Activated CD4-positive, alpha-beta memory T cell treated with anti-CD3 and anti-CD28 coated beads for 36 hours (primary cell): ENCODE measurements at regions of chr5 and their contacts with region 1.

Region 1: DNA sequence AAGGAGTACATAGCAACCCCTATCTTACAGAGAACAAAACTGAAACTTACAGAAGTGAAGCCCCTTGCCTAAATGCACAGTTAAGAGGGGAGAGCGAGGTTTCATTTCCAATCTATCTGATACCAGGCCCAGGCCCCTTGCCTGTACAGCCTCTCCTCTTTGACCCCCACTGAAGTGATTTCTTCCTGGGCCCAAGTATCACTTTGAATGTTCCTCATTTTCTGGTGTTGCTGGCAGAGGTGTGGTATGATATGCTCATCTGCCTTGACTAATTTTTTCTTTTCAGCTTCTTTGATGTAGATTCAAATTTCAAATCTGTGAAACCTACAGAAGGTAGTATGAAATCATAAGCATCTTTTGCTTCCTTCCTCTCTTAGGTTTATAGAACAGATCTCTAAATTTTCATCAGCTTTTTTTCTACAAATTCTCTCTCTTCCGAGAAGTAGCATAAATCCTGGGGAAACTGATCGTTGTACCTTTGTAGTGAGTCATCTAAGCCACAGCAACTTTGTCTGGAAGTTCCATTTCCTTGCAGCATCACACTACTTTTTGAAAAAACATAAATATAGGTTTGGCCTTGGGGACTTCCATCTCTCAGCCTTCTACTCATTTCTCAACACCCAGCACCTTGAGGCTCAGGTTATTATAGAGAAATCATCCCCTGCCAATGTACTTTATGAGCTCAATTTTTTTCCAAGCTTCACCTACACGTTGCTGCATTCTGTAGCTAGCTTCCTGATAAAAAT is 402.4 kb upstream of the PTGER4 start:
- DNase-seq: peak; percentile 63
- H3K4me3 Mint-ChIP-seq: peak overlapping the region; percentile 18
- H3K27ac Mint-ChIP-seq: peak overlapping the region; percentile 97
- H3K4me1 Mint-ChIP-seq: peaks cover 61% of the 10 kb centered on the region
- H3K27me3 Mint-ChIP-seq: no peaks in the 10 kb centered on the region

Region 2: GRCh38 chr5:39948867-39949468 is 328.4 kb before region 1 on chr5:
- CTCF ChIA-PET with region 1: interaction called, 3 read pairs
- POLR2A ChIA-PET with region 1: interaction called, 3 read pairs
- intact Hi-C with region 1: loop called (anchors 2 kb)
- DNase-seq: peak; percentile 54
- H3K4me3 Mint-ChIP-seq: no peak overlapping the region
- H3K27ac Mint-ChIP-seq: peak overlapping the region; percentile 4
- H3K4me1 Mint-ChIP-seq: peaks cover 3% of the 10 kb centered on the region
- H3K27me3 Mint-ChIP-seq: no peaks in the 10 kb centered on the region

Region 3: GRCh38 chr5:40240111-40240510 is 37.2 kb before region 1 on chr5:
- CTCF ChIA-PET with region 1: interaction called, 3 read pairs
- POLR2A ChIA-PET with region 1: interaction called, 5 read pairs
- intact Hi-C with region 1: loop called (anchors 1 kb)
- DNase-seq: peak; percentile 84
- H3K4me3 Mint-ChIP-seq: peak overlapping the region; percentile 21
- H3K27ac Mint-ChIP-seq: peak overlapping the region; percentile 92
- H3K4me1 Mint-ChIP-seq: peaks cover 42% of the 10 kb centered on the region
- H3K27me3 Mint-ChIP-seq: no peaks in the 10 kb centered on the region

Region 4: DNA sequence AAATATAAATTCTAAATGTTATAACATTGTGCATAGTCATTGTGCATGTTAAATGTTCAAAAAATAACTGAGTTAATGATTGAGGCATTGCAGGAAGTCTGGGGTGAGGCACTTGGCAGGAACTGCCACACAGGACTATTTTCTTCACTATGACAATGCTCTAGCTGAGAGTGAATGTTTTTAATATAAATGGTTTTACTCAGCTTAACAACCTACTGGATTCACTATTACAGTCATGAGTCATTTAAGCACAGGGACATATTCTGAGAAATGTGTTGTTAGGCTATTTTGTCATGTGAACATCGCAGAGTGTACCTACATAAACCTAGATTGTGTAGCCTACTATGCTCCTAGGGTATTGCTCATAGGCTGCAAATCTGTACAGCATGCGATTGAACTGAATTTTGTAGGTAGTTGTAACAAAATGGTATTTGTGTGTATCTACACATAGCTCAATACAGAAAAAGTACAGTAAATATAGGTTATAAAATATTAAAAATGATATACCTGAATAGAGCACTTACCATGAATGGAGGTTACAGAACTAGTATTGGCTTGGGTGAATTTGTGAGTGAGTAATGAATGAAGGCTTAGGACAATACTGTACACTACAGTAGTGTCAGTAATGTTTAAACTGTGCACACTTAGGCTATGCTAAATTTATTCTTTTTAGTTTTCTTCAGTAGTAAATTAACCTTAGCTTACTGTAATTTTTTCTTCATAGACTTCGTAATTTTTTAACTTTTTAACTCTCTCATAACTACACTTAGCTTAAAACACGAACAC is 56.3 kb after region 1 on chr5:
- CTCF ChIA-PET with region 1: interaction called, 7 read pairs
- POLR2A ChIA-PET with region 1: interaction called, 24 read pairs
- intact Hi-C with region 1: loop called (anchors 1 kb)
- DNase-seq: peak; percentile 56
- H3K4me3 Mint-ChIP-seq: no peak overlapping the region
- H3K27ac Mint-ChIP-seq: peak overlapping the region; percentile 33
- H3K4me1 Mint-ChIP-seq: peaks cover 50% of the 10 kb centered on the region
- H3K27me3 Mint-ChIP-seq: no peaks in the 10 kb centered on the region

Region 5: GRCh38 chr5:40437452-40437861 is 160.1 kb after region 1 on chr5:
- CTCF ChIA-PET with region 1: no interaction called
- POLR2A ChIA-PET with region 1: interaction called, 4 read pairs
- intact Hi-C with region 1: loop called (anchors 2 kb)
- DNase-seq: peak; percentile 58
- H3K4me3 Mint-ChIP-seq: no peak overlapping the region
- H3K27ac Mint-ChIP-seq: peak overlapping the region; percentile 70
- H3K4me1 Mint-ChIP-seq: peaks cover 74% of the 10 kb centered on the region
- H3K27me3 Mint-ChIP-seq: no peaks in the 10 kb centered on the region

Region 6: DNA sequence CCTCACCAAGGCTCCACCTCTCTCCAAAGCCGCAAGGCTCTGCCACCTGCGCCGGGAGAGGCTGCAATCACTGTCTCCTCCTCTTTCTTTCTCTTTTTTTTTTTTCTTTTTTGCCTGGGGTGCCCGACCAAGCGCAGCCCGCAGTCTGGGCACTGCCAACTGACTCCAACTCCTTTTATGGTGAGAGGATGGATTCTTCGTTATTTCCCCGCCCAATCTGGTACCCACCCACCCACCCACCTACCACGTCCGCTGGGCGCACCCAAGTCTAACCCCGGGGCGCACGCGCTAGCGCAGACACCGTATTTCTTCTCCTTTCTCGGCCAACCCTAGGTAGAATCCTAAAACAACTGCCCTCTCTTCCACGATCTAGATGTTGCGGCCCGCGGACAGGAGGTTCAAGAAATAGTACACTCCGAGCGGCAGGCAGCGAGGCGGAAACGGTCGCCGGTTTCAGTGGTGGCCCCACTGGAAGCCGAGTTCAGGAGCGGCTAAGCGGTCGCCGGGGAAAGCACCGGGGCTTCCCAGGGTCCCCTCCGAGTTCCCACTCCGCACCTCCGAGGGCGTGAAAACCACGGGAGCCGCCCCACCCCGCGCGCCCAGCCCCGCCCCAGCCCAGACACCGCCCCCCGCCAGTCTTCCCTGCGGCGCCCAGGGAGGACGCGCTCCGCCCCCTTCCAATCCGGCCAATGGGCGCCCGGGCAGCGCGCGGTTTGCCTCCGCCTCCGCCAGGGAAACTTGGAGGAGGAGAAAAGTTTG is 402.0 kb after region 1 on chr5:
- CTCF ChIA-PET with region 1: interaction called, 3 read pairs
- POLR2A ChIA-PET with region 1: interaction called, 4 read pairs
- intact Hi-C with region 1: loop called (anchors 1 kb)
- DNase-seq: peak; percentile 96
- H3K4me3 Mint-ChIP-seq: peak overlapping the region; percentile 93
- H3K27ac Mint-ChIP-seq: peak overlapping the region; percentile 97
- H3K4me1 Mint-ChIP-seq: peaks cover 37% of the 10 kb centered on the region
- H3K27me3 Mint-ChIP-seq: no peaks in the 10 kb centered on the region

Region 7: GRCh38 chr5:41009232-41009631 is 731.9 kb after region 1 on chr5:
- CTCF ChIA-PET with region 1: no interaction called
- POLR2A ChIA-PET with region 1: no interaction called
- intact Hi-C with region 1: no loop called
- DNase-seq: no peak
- H3K4me3 Mint-ChIP-seq: no peak overlapping the region
- H3K27ac Mint-ChIP-seq: no peak overlapping the region
- H3K4me1 Mint-ChIP-seq: no peaks in the 10 kb centered on the region
- H3K27me3 Mint-ChIP-seq: peaks cover 2% of the 10 kb centered on the region

Region 8: DNA sequence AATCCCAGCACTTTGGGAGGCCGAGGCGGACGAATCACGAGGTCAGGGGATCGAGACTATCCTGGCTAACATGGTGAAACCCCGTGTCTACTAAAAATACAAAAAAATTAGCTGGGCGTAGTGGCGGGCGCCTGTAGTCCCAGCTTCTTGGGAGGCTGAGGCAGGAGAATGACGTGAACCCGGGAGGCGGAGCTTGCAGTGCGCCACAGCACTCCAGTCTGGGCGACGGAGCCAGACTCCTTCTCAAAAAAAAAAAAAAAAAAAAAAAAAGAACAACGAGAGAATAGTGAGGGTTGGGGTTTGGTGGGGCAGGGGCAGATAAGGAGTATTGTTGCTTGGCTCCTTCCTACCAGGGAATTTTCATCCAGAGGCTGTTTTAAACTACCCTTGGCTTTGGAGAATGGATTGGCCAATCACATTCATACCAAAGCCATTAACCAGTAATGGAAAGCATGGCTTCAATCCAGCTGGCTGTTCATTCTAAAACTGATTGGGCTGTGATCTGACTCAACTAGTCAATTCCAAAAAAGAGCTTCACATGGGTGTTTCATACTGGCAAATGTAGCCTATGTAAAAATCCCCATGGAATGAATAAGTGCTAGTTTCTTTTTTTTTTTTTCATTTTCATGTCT is 1168.7 kb after region 1 on chr5:
- CTCF ChIA-PET with region 1: no interaction called
- POLR2A ChIA-PET with region 1: no interaction called
- intact Hi-C with region 1: no loop called
- DNase-seq: no peak
- H3K4me3 Mint-ChIP-seq: no peak overlapping the region
- H3K27ac Mint-ChIP-seq: no peak overlapping the region
- H3K4me1 Mint-ChIP-seq: no peaks in the 10 kb centered on the region
- H3K27me3 Mint-ChIP-seq: no peaks in the 10 kb centered on the region